ENCODE measurements at regions of chr14 and their contacts with region 1.

Region 1: GRCh38 chr14:75452900-75453747 is 25.3 kb downstream of the JDP2 start:
- DNase-seq: peak; percentile 100
- H3K4me3 ChIP-seq: peak overlapping the region; percentile 17; the same call in 1 of the 2 replicates
- H3K27ac ChIP-seq: peak overlapping the region; percentile 93
- H3K4me1 ChIP-seq: peaks cover 96% of the 10 kb centered on the region
- H3K27me3 ChIP-seq: no peaks in the 10 kb centered on the region
- CTCF ChIP-seq: peak; percentile 26; the same call in 1 of the 2 replicates

Region 2: DNA sequence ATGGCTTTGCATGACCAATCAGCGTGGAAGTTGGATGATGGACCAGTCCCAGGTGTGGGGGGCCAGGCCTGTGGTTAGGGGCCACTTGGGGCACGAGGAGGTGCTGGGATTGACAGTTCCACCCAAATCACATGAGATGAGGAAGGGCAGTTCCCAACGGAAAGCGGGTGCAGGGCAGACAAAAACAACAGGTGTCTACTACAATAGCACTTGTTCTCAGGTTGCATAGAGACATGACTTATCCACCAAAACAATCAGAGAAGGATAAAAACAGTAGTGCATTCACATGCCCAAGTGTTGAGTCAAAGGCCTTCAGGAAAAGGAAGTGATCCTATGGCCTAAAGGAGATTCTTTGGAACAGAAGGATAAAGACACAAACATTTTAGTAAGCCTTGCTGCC is 465.0 kb before region 1 on chr14:
- CTCF ChIA-PET with region 1: no interaction called
- POLR2A ChIA-PET with region 1: no interaction called
- intact Hi-C with region 1: loop called (anchors 5 kb)
- DNase-seq: peak; percentile 94 to 100
- H3K4me3 ChIP-seq: no peak overlapping the region
- H3K27ac ChIP-seq: peak overlapping the region; percentile 38
- H3K4me1 ChIP-seq: peaks cover 43% of the 10 kb centered on the region
- H3K27me3 ChIP-seq: no peaks in the 10 kb centered on the region
- CTCF ChIP-seq: no peak; the same call in 1 of the 2 replicates

Region 3: DNA sequence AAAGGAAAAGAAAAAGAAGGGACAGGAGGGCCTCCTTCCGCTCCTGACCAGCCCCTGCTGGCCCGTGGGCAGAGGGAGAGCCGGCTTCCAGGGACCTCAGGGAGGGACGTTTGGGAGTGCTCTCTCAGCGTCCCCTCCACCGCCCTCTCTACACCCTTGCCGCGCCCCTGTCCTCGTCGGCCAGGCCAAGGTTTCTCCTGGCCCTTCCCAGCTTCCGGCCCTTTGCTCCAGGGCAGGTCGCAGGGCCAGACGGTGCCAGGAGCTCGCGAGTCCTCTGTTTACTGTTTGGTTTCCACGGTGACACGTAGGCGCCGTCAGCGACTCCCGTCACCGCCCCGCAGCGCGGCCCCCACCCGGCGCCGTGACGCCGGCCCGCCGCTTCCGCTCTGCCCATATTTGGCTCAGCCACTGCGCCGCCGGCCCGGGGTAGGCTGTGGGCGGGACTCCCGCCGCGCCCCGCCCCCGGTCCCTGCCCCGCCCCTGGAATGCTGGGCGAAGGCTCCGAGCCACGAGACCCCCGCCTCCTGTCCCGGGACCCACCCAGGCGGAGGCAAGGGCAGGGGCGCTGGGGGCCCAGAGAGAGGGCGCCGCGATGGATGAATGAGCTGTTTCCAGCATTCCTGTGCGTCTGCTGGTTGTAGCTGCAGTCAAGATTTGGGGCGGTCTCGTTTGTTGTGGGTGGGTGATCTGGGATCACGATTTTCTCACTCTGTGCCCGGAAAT is 159.0 kb before region 1 on chr14:
- CTCF ChIA-PET with region 1: interaction called, 18 read pairs
- POLR2A ChIA-PET with region 1: interaction called, 23 read pairs
- intact Hi-C with region 1: no loop called
- DNase-seq: peak; percentile 98 to 100
- H3K4me3 ChIP-seq: peak overlapping the region; percentile 65
- H3K27ac ChIP-seq: peak overlapping the region; percentile 79
- H3K4me1 ChIP-seq: peaks cover 40% of the 10 kb centered on the region
- H3K27me3 ChIP-seq: no peaks in the 10 kb centered on the region
- CTCF ChIP-seq: no peak

Region 4: DNA sequence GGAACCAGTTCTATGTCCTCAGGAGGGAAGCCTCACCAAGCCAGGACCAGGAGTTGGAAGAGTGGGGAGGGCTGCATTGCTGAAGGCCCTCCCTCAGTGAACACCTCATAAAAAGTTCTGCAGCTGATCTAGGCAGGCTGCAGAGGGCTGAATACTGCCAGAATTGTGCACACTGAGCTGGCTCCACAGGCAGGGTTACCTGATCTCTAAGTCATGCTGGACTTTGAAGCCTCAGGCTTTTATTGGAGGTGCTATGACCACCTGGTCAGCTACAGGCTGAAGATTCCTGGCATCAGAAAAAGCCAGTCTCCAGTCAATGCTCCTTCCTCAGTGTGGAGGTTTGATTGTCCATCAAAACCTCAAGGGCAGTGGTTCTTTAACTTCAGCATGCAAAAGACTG is 134.8 kb before region 1 on chr14:
- CTCF ChIA-PET with region 1: no interaction called
- POLR2A ChIA-PET with region 1: no interaction called
- intact Hi-C with region 1: no loop called
- DNase-seq: no peak
- H3K4me3 ChIP-seq: no peak overlapping the region
- H3K27ac ChIP-seq: no peak overlapping the region
- H3K4me1 ChIP-seq: peaks cover 24% of the 10 kb centered on the region
- H3K27me3 ChIP-seq: no peaks in the 10 kb centered on the region
- CTCF ChIP-seq: no peak

Region 5: GRCh38 chr14:75440733-75441477 is 12.2 kb before region 1 on chr14:
- CTCF ChIA-PET with region 1: interaction called, 25 read pairs
- POLR2A ChIA-PET with region 1: interaction called, 21 read pairs
- intact Hi-C with region 1: loop called (anchors 1 kb)
- DNase-seq: no peak
- H3K4me3 ChIP-seq: no peak overlapping the region
- H3K27ac ChIP-seq: no peak overlapping the region
- H3K4me1 ChIP-seq: peaks cover 25% of the 10 kb centered on the region
- H3K27me3 ChIP-seq: no peaks in the 10 kb centered on the region
- CTCF ChIP-seq: no peak

Region 6: GRCh38 chr14:75554487-75554886 is 101.4 kb after region 1 on chr14:
- CTCF ChIA-PET with region 1: no interaction called
- POLR2A ChIA-PET with region 1: no interaction called
- intact Hi-C with region 1: loop called (anchors 1 kb)
- DNase-seq: peak; percentile 81 to 100
- H3K4me3 ChIP-seq: peak overlapping the region; percentile 12; the same call in 1 of the 2 replicates
- H3K27ac ChIP-seq: peak overlapping the region; percentile 70
- H3K4me1 ChIP-seq: peaks cover 52% of the 10 kb centered on the region
- H3K27me3 ChIP-seq: no peaks in the 10 kb centered on the region
- CTCF ChIP-seq: no peak

Region 7: DNA sequence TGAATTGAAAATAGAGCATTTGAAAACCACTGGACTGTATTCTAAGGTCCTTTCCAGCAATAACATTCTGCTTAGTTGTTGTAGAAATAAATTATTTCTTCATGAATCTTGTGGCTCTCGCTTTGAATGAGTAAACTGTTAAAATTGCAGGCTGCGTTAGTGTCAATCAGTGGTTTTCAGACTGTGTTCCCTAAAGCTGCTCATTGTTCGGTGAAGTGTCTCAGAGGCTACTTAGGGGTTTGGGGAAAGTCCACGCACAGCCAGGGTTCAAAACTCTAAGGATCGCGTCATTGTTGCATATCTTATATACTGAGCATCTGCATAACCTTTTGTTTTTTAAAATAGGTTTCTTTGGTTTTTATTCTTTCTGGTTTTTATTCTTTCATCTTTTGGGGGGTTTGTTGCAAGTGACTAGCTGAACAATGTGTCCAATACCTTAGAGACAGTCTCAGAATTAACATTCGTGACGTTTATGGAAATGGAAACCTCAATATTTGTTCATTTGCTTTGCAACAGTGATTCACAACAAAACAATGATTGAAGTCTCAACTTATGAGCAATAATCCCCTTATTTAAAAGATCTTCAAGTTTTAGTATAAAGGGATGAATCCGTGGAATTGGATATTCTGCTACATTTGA is 316.0 kb after region 1 on chr14:
- CTCF ChIA-PET with region 1: no interaction called
- POLR2A ChIA-PET with region 1: no interaction called
- intact Hi-C with region 1: no loop called
- DNase-seq: no peak
- H3K4me3 ChIP-seq: no peak overlapping the region
- H3K27ac ChIP-seq: no peak overlapping the region
- H3K4me1 ChIP-seq: no peaks in the 10 kb centered on the region
- H3K27me3 ChIP-seq: no peaks in the 10 kb centered on the region
- CTCF ChIP-seq: no peak

Region 8: GRCh38 chr14:76918751-76919543 is 1465.8 kb after region 1 on chr14:
- CTCF ChIA-PET with region 1: no interaction called
- POLR2A ChIA-PET with region 1: interaction called, 3 read pairs
- intact Hi-C with region 1: loop called (anchors 10 kb)
- DNase-seq: peak; percentile 98 to 100
- H3K4me3 ChIP-seq: peak overlapping the region; percentile 20; the same call in 1 of the 2 replicates
- H3K27ac ChIP-seq: peak overlapping the region; percentile 91
- H3K4me1 ChIP-seq: peaks cover 79% of the 10 kb centered on the region
- H3K27me3 ChIP-seq: no peaks in the 10 kb centered on the region
- CTCF ChIP-seq: peak; percentile 43; the same call in 1 of the 2 replicates